HEK293 (cell line): ENCODE measurements at regions of chr19 and their contacts with region 1.

Region 1: DNA sequence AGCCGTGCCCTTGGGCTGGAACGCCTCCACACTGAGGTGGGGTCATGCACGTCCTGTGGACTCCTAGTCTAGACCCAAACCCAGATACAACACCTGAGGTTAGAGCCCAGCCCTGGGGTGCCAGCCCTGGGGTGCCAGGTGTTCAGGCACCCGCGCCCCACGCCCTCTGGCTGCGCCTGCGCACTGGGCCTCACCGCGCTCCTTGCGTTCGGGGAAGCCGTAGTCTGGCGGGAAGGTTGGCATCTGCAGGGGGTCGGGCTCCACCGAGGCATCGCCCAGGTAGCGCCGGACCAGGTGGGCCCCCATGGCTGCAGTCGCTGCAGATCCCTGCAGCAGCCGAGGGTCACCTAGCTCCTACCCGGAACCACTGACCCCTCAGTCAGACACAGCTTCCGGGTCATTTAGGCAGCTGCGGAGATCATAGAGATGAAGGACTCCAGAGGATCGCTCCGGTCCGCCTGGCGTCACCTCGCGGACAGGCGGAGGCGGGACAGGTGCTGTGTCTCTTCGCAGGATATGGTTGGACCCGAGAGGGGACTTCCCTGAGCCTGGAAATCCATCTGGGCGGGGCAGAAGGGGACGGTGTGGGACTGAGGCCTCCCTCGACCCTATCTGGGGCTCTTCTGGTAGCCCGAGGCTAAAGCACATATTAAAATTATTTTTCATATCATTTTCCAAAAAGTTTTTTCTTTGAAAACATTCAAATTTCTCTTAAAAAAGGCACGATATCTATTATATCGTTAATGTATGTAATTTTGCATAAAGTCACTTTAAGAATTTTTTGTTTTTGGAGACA is at the start of gene NDUFB7:
- H3K4me3 ChIP-seq: peak within 1 kb of the TSS; percentile 72
- H3K27ac ChIP-seq: peak within 1 kb of the TSS; percentile 57; the same call in 1 of the 2 replicates
- H3K4me1 ChIP-seq: peaks cover 4% of the 10 kb centered on the region; the same call in 1 of the 2 replicates
- CTCF ChIP-seq: peak; percentile 97

Region 2: GRCh38 chr19:14277608-14278007 is 294.3 kb before region 1 on chr19:
- CTCF ChIA-PET with region 1: no interaction called
- POLR2A ChIA-PET with region 1: no interaction called
- H3K4me3 ChIP-seq: no peak overlapping the region
- H3K27ac ChIP-seq: no peak overlapping the region
- H3K4me1 ChIP-seq: no peaks in the 10 kb centered on the region
- CTCF ChIP-seq: no peak

Region 3: GRCh38 chr19:14689598-14690503 is 118.0 kb after region 1 on chr19 and contains the start of gene ZNF333:
- CTCF ChIA-PET with region 1: interaction called, 137 read pairs
- POLR2A ChIA-PET with region 1: interaction called, 14 read pairs
- H3K4me3 ChIP-seq: peak within 1 kb of the TSS; percentile 74
- H3K27ac ChIP-seq: peak within 1 kb of the TSS; percentile 82
- H3K4me1 ChIP-seq: no peaks in the 10 kb centered on the region; the same call in 1 of the 2 replicates
- CTCF ChIP-seq: no peak

Region 4: GRCh38 chr19:14890643-14891379 is 318.9 kb after region 1 on chr19:
- CTCF ChIA-PET with region 1: interaction called, 12 read pairs
- POLR2A ChIA-PET with region 1: no interaction called
- H3K4me3 ChIP-seq: no peak overlapping the region
- H3K27ac ChIP-seq: no peak overlapping the region
- H3K4me1 ChIP-seq: no peaks in the 10 kb centered on the region
- CTCF ChIP-seq: no peak